Sigmoid colon (tissue), 7 donors: ENCODE measurements at regions of chr7 and their contacts with region 1.

Region 1: GRCh38 chr7:35037526-35038339 is 448 bp upstream of the DPY19L1 start:
- DNase-seq: peak; percentile 96
- H3K4me3 ChIP-seq: peak overlapping the region; percentile 57 to 71 (median 68)
- H3K27ac ChIP-seq: peak overlapping the region; percentile 88 to 94 (median 90)
- H3K4me1 ChIP-seq: peaks cover 0 to 24% (median 19%) of the 10 kb centered on the region in 4 donors
- H3K27me3 ChIP-seq: no peaks in the 10 kb centered on the region
- CTCF ChIP-seq: peak; percentile 70 to 81 (median 74)
- EP300 ChIP-seq: no peak
- POLR2A ChIP-seq: no peak

Region 2: GRCh38 chr7:34973400-34973760 is 64.4 kb before region 1 on chr7:
- intact Hi-C with region 1: no loop called
- DNase-seq: no peak
- H3K4me3 ChIP-seq: no peak overlapping the region
- H3K27ac ChIP-seq: no peak overlapping the region
- H3K4me1 ChIP-seq: no peaks in the 10 kb centered on the region
- H3K27me3 ChIP-seq: no peaks in the 10 kb centered on the region
- CTCF ChIP-seq: no peak
- EP300 ChIP-seq: no peak
- POLR2A ChIP-seq: no peak

Region 3: GRCh38 chr7:35003679-35004303 is 33.9 kb before region 1 on chr7:
- intact Hi-C with region 1: loop called (anchors 5 kb)
- DNase-seq: peak; percentile 65
- H3K4me3 ChIP-seq: no peak overlapping the region
- H3K27ac ChIP-seq: peak overlapping the region in 3 of 4 donors; percentile 73 to 77 (median 76)
- H3K4me1 ChIP-seq: peaks cover 0 to 29% (median 25%) of the 10 kb centered on the region in 4 donors
- H3K27me3 ChIP-seq: no peaks in the 10 kb centered on the region
- CTCF ChIP-seq: no peak
- EP300 ChIP-seq: no peak
- POLR2A ChIP-seq: no peak

Region 4: DNA sequence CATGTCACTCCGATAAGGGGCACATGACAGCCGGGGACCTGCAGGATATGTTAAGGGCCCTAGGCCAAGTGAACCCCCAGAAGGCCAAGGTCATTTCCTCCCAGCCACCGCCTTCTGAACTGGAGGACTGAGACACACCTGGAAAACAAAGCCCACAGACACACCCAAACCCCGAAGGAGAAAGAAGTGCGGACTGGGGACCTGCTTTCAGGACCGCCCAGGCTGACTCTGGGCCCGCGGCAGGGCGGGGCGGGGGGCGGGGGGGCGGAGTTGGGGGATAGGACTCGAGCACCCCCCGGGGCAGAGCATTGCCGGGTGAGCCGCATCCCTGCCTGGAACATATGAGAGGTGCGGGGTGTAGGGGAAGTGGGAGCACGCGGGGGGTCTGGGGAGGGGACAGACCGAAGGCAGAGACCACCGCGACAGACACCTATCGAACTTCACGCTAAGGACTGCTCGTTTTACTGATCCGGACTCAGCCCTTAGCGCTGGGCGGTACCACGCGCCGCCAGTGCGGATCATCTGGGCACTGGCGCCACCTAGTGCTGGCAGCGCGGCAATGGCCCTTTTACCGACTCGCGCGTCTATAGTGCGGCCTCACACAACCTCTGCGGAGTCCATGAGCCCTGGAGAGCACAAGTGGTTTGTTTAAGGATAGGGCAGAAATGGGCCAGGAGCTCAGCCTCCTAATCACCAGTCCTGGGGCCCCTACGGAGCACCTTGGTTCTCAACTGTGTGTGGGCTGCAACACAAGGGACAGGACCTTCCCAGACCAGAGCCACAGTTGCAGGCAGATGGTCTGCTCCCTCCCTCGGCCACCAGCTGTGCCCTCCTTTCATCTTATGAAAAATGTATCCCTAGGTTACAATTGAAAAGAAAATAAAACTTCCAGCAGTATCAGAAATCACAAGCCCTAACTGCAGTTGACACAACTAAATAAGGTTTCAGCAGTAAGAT is 499.6 kb after region 1 on chr7:
- intact Hi-C with region 1: loop called (anchors 5 kb)
- DNase-seq: peak; percentile 84
- H3K4me3 ChIP-seq: peak overlapping the region; percentile 18 to 47 (median 40)
- H3K27ac ChIP-seq: no peak overlapping the region
- H3K4me1 ChIP-seq: peaks cover 0 to 7% (median 3%) of the 10 kb centered on the region in 4 donors
- H3K27me3 ChIP-seq: no peaks in the 10 kb centered on the region
- CTCF ChIP-seq: peak; percentile 70 to 92 (median 76)
- EP300 ChIP-seq: no peak
- POLR2A ChIP-seq: no peak